Endothelial cell of umbilical vein (primary cell): ENCODE measurements at regions of chr9 and their contacts with region 1.

Region 1: DNA sequence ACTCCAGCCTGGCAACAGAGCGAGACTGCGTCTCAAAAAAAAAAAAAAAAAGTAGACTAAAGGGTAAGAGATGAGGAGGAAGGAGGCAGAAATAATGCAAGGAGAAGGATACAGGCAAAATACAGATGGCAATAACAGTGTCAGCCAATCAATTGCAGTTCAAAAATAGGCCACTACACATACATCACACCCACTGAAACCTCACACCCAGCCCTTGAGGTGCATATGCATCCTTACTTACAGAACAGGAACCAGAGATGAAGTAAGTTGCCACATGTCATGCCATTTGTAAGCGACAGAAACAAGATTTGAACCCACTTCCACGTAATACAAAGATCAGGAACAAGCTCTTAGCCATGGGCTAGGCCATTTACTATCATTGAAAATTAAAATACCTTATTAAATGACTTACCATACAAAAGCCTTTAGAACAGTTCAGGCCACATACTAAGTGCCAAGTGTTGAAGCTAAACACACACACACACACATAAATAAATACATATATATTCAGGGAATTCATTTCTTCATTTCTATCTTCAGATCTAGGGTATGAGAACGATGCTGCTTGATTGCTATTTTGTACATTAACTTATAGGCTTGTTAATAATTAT is 98.4 kb downstream of the FNBP1 start:
- DNase-seq: no peak
- H3K4me3 ChIP-seq: no peak overlapping the region
- H3K27ac ChIP-seq: no peak overlapping the region
- H3K4me1 ChIP-seq: peaks cover 5% of the 10 kb centered on the region
- H3K27me3 ChIP-seq: no peaks in the 10 kb centered on the region
- CTCF ChIP-seq: no peak
- POLR2A ChIP-seq: no peak

Region 2: DNA sequence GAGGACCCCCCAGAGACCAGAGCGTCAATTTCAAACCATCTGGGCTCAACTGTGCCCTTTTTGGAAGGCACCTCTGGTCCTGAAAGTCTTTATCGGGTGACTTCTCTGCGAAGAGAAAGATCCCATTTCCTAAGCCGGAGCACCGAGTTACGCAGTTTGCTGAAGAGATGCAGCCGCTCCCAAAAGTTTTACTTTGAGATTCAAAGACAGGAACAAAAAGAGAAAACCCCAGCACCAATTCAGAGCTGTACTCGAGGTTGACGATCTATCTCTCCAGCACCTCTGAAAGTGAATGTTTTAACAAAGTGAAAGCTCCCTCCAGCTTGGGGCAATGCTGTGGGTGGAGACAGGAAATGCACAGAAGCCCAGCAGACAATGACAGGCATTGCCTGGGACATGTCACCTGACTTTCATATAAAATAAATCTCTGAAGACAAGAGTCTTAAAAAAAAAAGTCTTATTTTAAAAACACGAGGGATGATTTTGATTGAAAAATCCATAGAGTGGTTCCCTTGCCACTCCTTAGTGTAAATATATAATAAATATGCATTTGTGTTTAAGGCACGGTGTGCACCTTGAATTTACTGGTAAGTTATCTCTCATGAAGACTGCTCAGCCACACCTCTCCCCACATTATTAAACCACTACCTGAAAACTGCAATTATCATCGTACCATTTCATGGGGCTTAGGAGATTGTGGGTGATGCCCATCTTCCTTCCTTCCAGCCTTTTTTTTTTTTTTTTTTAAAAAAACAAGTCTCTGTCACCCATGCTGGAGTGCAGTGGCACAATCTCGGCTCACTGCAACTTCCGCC is 18.5 kb after region 1 on chr9:
- CTCF ChIA-PET with region 1: interaction called, 3 read pairs
- POLR2A ChIA-PET with region 1: no interaction called
- dilution Hi-C with region 1: no loop called
- intact Hi-C with region 1: loop called (anchors 2 kb)
- DNase-seq: peak; percentile 70
- H3K4me3 ChIP-seq: peak overlapping the region; percentile 30 to 93 (median 86)
- H3K27ac ChIP-seq: peak overlapping the region; percentile 76
- H3K4me1 ChIP-seq: peaks cover 30% of the 10 kb centered on the region
- H3K27me3 ChIP-seq: no peaks in the 10 kb centered on the region
- CTCF ChIP-seq: no peak
- POLR2A ChIP-seq: peak; percentile 37

Region 3: DNA sequence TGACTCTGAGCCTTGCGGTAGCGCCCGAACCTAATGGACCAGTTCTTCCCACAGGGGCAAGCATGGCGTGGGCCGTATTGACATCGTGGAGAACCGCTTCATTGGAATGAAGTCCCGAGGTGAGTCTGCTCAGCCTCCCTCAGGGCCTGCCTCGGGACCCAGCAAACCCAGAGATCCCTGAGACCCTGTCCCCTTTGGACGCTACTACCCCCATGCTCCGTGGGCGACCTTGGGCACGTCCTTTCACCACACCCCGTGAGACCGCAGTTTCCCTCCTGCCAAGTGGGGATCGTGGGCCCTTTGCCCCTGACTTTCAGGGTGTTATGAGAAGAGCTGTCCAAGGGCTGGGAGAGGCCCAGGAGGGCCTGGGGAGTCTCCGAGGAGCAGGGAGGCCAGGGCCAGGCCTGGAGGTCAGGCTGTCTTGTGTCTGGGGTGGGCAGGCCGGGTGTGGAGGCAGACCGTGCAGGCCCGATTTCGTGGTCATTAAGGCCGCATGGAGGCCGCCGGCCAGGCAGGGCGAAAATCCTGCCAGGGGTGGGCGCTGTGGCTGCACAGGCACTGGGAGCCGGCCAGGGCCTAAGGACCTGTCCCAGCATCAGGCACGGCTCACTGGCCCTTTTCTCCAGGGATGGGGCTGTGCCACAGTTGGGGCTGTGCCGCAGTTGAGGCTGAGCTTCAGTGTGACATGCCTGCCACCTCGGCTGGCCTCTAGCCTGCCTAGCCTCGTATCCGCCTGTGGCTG is 535.9 kb after region 1 on chr9:
- CTCF ChIA-PET with region 1: no interaction called
- POLR2A ChIA-PET with region 1: no interaction called
- dilution Hi-C with region 1: no loop called
- intact Hi-C with region 1: no loop called
- DNase-seq: no peak
- H3K4me3 ChIP-seq: no peak overlapping the region
- H3K27ac ChIP-seq: no peak overlapping the region
- H3K4me1 ChIP-seq: no peaks in the 10 kb centered on the region
- H3K27me3 ChIP-seq: no peaks in the 10 kb centered on the region
- CTCF ChIP-seq: no peak
- POLR2A ChIP-seq: no peak